GM12878 (cell line): ENCODE measurements at regions of chrX and their contacts with region 1.

Region 1: GRCh38 chrX:153971450-153972367 is at the start of gene HCFC1:
- DNase-seq: peak; percentile 64
- ATAC-seq: peak; percentile 63
- H3K4me3 ChIP-seq: peak within 1 kb of the TSS; percentile 95
- H3K27ac ChIP-seq: peak within 1 kb of the TSS; percentile 99
- H3K4me1 ChIP-seq: peaks cover 19% of the 10 kb centered on the region
- H3K27me3 ChIP-seq: no peaks in the 10 kb centered on the region
- CTCF ChIP-seq: no peak
- EP300 ChIP-seq: no peak; a peak in 1 of 4 replicates
- POLR2A ChIP-seq: peak; percentile 74
- RAD21 ChIP-seq: no peak
- polyA plus RNA-seq, gene HCFC1: 3.9 to 7.6 TPM

Region 2: GRCh38 chrX:153927922-153928760 is 43.6 kb before region 1 on chrX:
- CTCF ChIA-PET with region 1: interaction called, 31 read pairs
- POLR2A ChIA-PET with region 1: interaction called, 68 read pairs
- RAD21 ChIA-PET with region 1: interaction called, 48 read pairs
- SMC1A ChIA-PET with region 1: interaction called, 21 read pairs
- in situ Hi-C with region 1: no loop called
- intact Hi-C with region 1: loop called (anchors 2 kb)
- DNase-seq: peak; percentile 91
- ATAC-seq: peak; percentile 78
- H3K4me3 ChIP-seq: peak overlapping the region; percentile 74
- H3K27ac ChIP-seq: peak overlapping the region; percentile 98
- H3K4me1 ChIP-seq: peaks cover 9% of the 10 kb centered on the region; the same call in 1 of the 2 replicates
- H3K27me3 ChIP-seq: no peaks in the 10 kb centered on the region
- CTCF ChIP-seq: 0 out of 6 replicates have a peak, but pooled peaks of 2 of the 3 experiments have one; percentile 3 to 7
- EP300 ChIP-seq: no peak
- POLR2A ChIP-seq: peak; percentile 74; the same call in 1 of the 2 replicates
- RAD21 ChIP-seq: no peak

Region 3: GRCh38 chrX:153981771-153982533 is 10.2 kb after region 1 on chrX:
- CTCF ChIA-PET with region 1: interaction called, 6 read pairs
- POLR2A ChIA-PET with region 1: interaction called, 17 read pairs
- RAD21 ChIA-PET with region 1: interaction called, 8 read pairs
- SMC1A ChIA-PET with region 1: interaction called, 9 read pairs
- in situ Hi-C with region 1: no loop called
- intact Hi-C with region 1: no loop called
- DNase-seq: no peak
- ATAC-seq: no peak
- H3K4me3 ChIP-seq: no peak overlapping the region
- H3K27ac ChIP-seq: peak overlapping the region; percentile 60
- H3K4me1 ChIP-seq: peaks cover 39% of the 10 kb centered on the region
- H3K27me3 ChIP-seq: no peaks in the 10 kb centered on the region
- CTCF ChIP-seq: no peak
- EP300 ChIP-seq: no peak
- POLR2A ChIP-seq: peak; percentile 29; the same call in 1 of the 2 replicates
- RAD21 ChIP-seq: no peak

Region 4: DNA sequence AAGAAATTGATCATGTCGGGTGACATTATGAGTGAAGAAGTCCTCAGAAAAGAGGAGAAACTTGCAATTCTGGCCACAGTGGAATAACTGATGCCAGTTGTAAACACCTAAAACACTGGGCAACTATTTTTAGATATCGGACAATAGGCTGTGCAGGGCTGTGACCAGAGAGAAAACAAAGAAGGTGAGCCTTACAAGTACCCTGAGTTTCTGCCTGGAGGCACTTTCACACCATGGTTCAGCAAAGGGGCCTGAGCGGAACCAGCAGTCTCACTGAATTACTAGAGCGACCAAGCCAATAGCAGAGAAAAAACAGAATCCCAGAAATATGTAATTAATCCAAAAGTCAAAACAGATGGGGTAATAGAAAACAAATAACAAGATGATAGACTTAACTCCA is 36.8 kb after region 1 on chrX:
- CTCF ChIA-PET with region 1: interaction called, 35 read pairs
- POLR2A ChIA-PET with region 1: interaction called, 8 read pairs
- RAD21 ChIA-PET with region 1: interaction called, 31 read pairs
- SMC1A ChIA-PET with region 1: interaction called, 8 read pairs
- in situ Hi-C with region 1: no loop called
- intact Hi-C with region 1: loop called (anchors 1 kb)
- DNase-seq: no peak
- ATAC-seq: peak; percentile 55
- H3K4me3 ChIP-seq: no peak overlapping the region
- H3K27ac ChIP-seq: peak overlapping the region; percentile 76
- H3K4me1 ChIP-seq: peaks cover 10% of the 10 kb centered on the region
- H3K27me3 ChIP-seq: no peaks in the 10 kb centered on the region
- CTCF ChIP-seq: no peak
- EP300 ChIP-seq: no peak
- POLR2A ChIP-seq: no peak
- RAD21 ChIP-seq: no peak

Region 5: DNA sequence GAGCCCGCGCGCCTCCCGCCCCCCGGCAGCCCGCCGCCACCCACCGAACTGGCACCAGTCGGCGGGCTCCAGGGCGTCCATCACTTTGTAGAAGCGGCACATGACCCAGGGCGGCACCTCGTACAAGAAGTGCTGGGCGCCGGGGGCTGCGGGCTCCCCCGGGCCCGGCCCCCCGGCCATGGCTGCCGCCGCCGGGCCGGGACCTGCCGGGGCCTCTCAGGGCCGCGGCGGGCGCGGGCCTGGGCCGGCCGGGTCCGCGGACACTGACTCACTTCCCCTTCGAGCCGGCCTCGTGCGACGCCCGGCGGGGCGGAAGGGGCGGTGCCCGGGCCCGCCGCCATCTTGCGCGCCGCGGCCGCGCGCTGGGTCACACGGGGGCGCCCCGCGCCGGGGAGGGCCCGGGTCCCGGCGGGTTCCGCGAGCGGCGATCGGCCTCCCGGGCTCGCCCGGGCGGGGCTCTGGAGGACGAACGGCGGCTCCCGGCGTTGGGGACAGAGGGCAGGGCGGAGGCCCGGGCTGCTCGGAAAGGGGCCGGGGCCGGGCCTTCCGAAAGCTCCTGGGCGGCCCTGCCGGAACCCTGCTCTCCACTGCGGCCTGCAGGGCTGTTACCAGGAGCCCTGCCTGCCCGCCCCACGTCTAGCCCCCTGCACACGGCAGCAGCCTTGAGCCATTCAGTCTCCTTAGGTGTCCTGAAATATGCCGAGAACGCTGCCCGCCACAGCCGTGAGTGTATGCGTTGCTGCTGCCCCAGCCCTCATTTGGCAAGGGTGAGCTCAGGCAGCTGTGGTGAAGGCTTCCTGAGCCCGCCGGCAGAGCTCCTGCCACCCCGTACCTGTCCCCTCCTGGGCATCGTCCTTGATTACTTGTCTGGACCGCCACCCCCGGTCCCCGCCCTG is 48.2 kb after region 1 on chrX and contains the start of gene IRAK1:
- CTCF ChIA-PET with region 1: interaction called, 35 read pairs
- POLR2A ChIA-PET with region 1: interaction called, 11 read pairs
- RAD21 ChIA-PET with region 1: interaction called, 14 read pairs
- SMC1A ChIA-PET with region 1: interaction called, 10 read pairs
- in situ Hi-C with region 1: no loop called
- intact Hi-C with region 1: no loop called
- DNase-seq: no peak
- ATAC-seq: peak; percentile 69
- H3K4me3 ChIP-seq: peak within 1 kb of the TSS; percentile 85
- H3K27ac ChIP-seq: peak within 1 kb of the TSS; percentile 82
- H3K4me1 ChIP-seq: peaks cover 11% of the 10 kb centered on the region
- H3K27me3 ChIP-seq: no peaks in the 10 kb centered on the region
- CTCF ChIP-seq: no peak; a peak in 1 of 6 replicates
- EP300 ChIP-seq: no peak
- POLR2A ChIP-seq: peak; percentile 64
- RAD21 ChIP-seq: no peak
- polyA plus RNA-seq, gene IRAK1: 4.2 to 15.1 TPM